HCT116 (cell line): ENCODE measurements at regions of chr2 and their contacts with region 1.

Region 1: GRCh38 chr2:29130295-29130694 is 15.1 kb downstream of the CLIP4 start:
- DNase-seq: no peak
- ATAC-seq: peak; percentile 84
- H3K4me3 ChIP-seq: no peak overlapping the region; a peak in 1 of 4 replicates
- H3K27ac ChIP-seq: peak overlapping the region; percentile 49; the same call in 1 of the 2 replicates
- H3K4me1 ChIP-seq: peaks cover 16 to 40% of the 10 kb centered on the region in 2 experiments
- H3K27me3 ChIP-seq: no peaks in the 10 kb centered on the region
- CTCF ChIP-seq: no peak
- POLR2A ChIP-seq: no peak
- RAD21 ChIP-seq: no peak

Region 2: GRCh38 chr2:28764909-28765711 is 365.2 kb before region 1 on chr2:
- CTCF ChIA-PET with region 1: no interaction called
- POLR2A ChIA-PET with region 1: no interaction called
- RAD21 ChIA-PET with region 1: no interaction called
- intact Hi-C with region 1: no loop called
- DNase-seq: no peak
- ATAC-seq: no peak
- H3K4me3 ChIP-seq: no peak overlapping the region
- H3K27ac ChIP-seq: no peak overlapping the region
- H3K4me1 ChIP-seq: no peaks in the 10 kb centered on the region
- H3K27me3 ChIP-seq: no peaks in the 10 kb centered on the region
- CTCF ChIP-seq: no peak
- POLR2A ChIP-seq: no peak
- RAD21 ChIP-seq: no peak

Region 3: DNA sequence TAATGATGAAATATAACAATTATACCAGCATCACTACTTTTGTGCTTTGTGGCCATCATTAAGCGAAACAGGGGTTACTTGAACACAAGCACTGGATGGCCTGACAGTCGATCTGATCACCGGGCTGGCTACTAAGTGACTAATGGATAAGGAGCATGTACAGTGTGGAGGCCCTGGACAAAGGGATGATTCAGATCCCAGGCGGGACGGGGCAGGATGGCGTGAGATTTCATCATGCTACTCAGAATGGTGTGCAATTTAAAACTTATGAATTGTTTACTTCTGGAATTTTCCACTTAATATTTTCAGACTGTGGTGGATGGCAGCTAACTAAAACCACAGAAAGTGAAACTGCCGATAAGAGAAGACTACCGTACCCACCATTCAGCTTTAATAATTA is 22.1 kb before region 1 on chr2:
- CTCF ChIA-PET with region 1: no interaction called
- POLR2A ChIA-PET with region 1: interaction called, 21 read pairs
- RAD21 ChIA-PET with region 1: no interaction called
- intact Hi-C with region 1: no loop called
- DNase-seq: peak; percentile 87
- ATAC-seq: peak; percentile 78
- H3K4me3 ChIP-seq: peak overlapping the region; percentile 15 to 41; a peak in 2 of 4 replicates
- H3K27ac ChIP-seq: no peak overlapping the region
- H3K4me1 ChIP-seq: peaks cover 13 to 62% of the 10 kb centered on the region in 2 experiments; a peak in 3 of 4 replicates
- H3K27me3 ChIP-seq: no peaks in the 10 kb centered on the region
- CTCF ChIP-seq: no peak
- POLR2A ChIP-seq: no peak
- RAD21 ChIP-seq: no peak; the same call in 1 of the 2 replicates

Region 4: DNA sequence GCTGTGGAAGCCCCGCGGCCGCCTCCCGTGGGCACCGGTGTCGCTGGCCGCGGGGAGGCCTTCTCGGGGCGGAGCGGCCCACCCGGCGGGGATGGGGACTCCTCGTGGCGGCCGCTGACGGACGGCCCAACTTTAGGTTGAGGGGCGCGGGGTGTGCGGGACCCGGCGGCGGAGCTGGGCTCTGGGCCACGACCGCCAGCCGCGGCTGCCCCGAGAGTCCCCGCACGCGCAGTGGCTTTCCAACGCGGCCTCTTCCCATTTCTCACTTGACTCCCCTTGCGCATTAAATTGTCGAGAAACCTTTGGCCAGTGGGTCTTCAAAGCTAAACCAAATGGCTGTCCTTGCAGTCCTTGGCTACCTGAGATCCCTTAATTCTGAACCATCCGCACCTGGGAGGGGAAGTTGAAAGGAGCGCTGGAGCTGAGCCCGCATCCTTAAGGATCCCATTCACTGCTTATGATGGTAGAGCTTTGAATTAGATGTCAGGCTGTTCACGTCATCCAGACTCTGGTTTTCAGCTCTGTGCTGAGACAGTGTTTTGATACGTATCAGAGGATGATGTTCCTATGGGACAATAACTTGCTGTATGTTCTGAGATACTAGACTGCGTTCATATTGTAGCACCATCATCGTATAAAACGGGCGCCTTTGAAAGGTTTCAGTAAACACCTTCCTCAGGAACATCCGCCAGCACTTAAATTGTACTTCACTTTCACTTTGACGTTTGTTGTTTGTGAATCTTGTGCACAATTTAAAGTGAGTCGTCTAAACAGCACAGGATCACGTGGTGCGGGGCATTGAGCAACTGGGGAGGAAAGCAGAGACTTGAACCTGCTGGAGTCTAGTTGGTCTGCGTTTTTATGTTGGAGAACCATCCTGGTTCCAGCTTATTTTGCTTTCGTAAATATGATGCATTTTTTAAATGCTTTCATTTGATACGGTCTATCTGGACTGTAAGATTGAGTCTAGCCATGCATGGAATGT is 14.2 kb before region 1 on chr2:
- CTCF ChIA-PET with region 1: interaction called, 3 read pairs
- POLR2A ChIA-PET with region 1: interaction called, 46 read pairs
- RAD21 ChIA-PET with region 1: interaction called in 1 of 2 experiments, 4 read pairs
- intact Hi-C with region 1: no loop called
- DNase-seq: no peak
- ATAC-seq: peak; percentile 8; the same call in 1 of the 2 replicates
- H3K4me3 ChIP-seq: peak overlapping the region; percentile 54 to 64
- H3K27ac ChIP-seq: peak overlapping the region; percentile 81
- H3K4me1 ChIP-seq: peaks cover 34 to 78% of the 10 kb centered on the region in 2 experiments
- H3K27me3 ChIP-seq: no peaks in the 10 kb centered on the region
- CTCF ChIP-seq: no peak
- POLR2A ChIP-seq: no peak
- RAD21 ChIP-seq: no peak